Breast epithelium (tissue), 4 donors: ENCODE measurements at regions of chr14 and their contacts with region 1.

Region 1: DNA sequence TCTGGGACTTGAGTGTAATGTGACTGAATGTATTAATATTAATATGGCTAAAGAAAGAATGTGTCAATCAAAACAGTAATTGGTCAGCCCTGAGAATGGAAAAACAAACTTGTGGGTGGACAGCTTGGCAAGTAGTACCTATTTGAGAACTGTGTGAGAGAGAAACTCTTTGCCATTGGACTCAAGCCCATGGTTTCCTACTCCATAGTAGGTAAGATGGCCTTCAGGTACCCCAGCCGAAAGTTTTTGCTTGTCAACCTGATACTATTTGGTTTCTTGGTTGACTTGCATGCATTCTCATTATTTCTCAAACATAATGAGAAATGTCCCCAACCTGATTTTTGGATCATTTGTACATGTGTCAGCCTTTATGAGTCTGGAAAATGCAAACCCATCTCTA is 391.1 kb downstream of the MDGA2 start:
- DNase-seq: no peak
- H3K4me3 ChIP-seq: no peak overlapping the region
- H3K27ac ChIP-seq: no peak overlapping the region
- H3K4me1 ChIP-seq: no peaks in the 10 kb centered on the region
- H3K27me3 ChIP-seq: no peaks in the 10 kb centered on the region
- CTCF ChIP-seq: no peak
- POLR2A ChIP-seq: no peak

Region 2: GRCh38 chr14:46788994-46789393 is 495.3 kb before region 1 on chr14:
- intact Hi-C with region 1: loop called (anchors 5 kb)
- DNase-seq: no peak
- H3K4me3 ChIP-seq: no peak overlapping the region
- H3K27ac ChIP-seq: no peak overlapping the region
- H3K4me1 ChIP-seq: no peaks in the 10 kb centered on the region
- H3K27me3 ChIP-seq: no peaks in the 10 kb centered on the region
- CTCF ChIP-seq: no peak
- POLR2A ChIP-seq: no peak

Region 3: GRCh38 chr14:46999661-47000060 is 284.6 kb before region 1 on chr14:
- intact Hi-C with region 1: no loop called
- DNase-seq: no peak
- H3K4me3 ChIP-seq: no peak overlapping the region
- H3K27ac ChIP-seq: no peak overlapping the region
- H3K4me1 ChIP-seq: no peaks in the 10 kb centered on the region
- H3K27me3 ChIP-seq: no peaks in the 10 kb centered on the region
- CTCF ChIP-seq: no peak
- POLR2A ChIP-seq: no peak

Region 4: GRCh38 chr14:47269756-47270492 is 14.4 kb before region 1 on chr14:
- intact Hi-C with region 1: no loop called
- DNase-seq: no peak
- H3K4me3 ChIP-seq: no peak overlapping the region
- H3K27ac ChIP-seq: no peak overlapping the region
- H3K4me1 ChIP-seq: no peaks in the 10 kb centered on the region
- H3K27me3 ChIP-seq: no peaks in the 10 kb centered on the region
- CTCF ChIP-seq: no peak
- POLR2A ChIP-seq: no peak

Region 5: DNA sequence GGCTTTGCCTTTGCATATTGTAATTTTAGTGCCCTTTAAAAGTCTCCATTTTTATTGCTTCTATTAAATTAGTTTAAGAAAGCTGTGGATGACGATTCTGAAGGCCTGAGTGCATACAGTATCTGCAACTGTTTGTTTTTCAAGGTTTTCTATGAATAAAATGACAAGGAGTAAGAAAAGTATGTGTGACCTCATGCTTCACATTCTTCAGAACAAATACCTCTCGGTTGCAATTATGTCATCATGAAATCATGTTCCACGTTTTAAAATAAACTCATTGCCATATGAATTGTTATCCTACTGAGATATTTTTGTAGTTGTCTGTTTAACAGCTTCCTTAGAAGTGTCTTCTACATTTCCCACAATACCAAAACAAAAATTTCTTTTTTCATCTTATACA is 16.5 kb after region 1 on chr14:
- intact Hi-C with region 1: no loop called
- DNase-seq: no peak
- H3K4me3 ChIP-seq: no peak overlapping the region
- H3K27ac ChIP-seq: no peak overlapping the region
- H3K4me1 ChIP-seq: no peaks in the 10 kb centered on the region
- H3K27me3 ChIP-seq: no peaks in the 10 kb centered on the region
- CTCF ChIP-seq: no peak
- POLR2A ChIP-seq: no peak

Region 6: DNA sequence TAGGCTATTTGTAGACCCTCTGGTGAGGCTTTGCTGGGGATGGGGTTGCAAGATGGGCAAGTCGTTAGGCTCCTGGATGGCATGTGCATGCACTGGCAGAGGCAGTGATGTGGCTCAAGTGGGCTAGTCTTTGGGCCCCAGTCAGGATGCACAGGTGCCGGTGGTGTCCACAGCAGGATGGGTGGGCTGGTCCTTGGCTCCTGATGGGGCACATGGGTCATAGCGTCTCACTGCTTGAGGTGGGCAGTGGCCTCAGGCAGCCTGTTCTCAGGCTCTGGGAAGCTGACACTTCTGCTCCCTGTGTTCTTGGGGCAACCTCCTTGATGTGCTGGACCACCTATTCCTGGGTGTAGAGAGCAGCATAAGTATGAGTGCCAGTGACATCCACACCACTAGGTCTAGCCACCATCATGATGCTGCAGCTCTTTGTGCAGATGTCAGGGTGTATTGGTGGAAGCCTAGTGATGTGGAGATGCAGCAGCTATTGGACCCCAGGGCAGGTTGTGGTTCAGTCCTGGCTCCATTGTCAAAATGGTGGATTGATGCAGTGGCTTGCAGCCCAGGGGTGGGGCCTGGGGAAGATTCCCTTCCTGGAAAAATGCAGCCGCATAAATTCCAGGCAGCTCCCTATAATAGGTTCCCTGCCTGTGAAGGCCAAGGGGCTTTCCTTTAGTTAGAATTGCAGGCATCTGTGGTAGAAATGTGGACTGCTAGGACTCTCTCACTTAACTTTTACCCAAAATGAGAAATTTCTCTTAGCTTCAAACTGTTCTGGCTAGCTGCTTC is 1133.6 kb after region 1 on chr14:
- intact Hi-C with region 1: no loop called
- DNase-seq: no peak
- H3K4me3 ChIP-seq: no peak overlapping the region
- H3K27ac ChIP-seq: no peak overlapping the region
- H3K4me1 ChIP-seq: no peaks in the 10 kb centered on the region
- H3K27me3 ChIP-seq: no peaks in the 10 kb centered on the region
- CTCF ChIP-seq: no peak
- POLR2A ChIP-seq: no peak